Heart left ventricle (tissue), 16 donors: ENCODE measurements at regions of chr11 and their contacts with region 1.

Region 1: DNA sequence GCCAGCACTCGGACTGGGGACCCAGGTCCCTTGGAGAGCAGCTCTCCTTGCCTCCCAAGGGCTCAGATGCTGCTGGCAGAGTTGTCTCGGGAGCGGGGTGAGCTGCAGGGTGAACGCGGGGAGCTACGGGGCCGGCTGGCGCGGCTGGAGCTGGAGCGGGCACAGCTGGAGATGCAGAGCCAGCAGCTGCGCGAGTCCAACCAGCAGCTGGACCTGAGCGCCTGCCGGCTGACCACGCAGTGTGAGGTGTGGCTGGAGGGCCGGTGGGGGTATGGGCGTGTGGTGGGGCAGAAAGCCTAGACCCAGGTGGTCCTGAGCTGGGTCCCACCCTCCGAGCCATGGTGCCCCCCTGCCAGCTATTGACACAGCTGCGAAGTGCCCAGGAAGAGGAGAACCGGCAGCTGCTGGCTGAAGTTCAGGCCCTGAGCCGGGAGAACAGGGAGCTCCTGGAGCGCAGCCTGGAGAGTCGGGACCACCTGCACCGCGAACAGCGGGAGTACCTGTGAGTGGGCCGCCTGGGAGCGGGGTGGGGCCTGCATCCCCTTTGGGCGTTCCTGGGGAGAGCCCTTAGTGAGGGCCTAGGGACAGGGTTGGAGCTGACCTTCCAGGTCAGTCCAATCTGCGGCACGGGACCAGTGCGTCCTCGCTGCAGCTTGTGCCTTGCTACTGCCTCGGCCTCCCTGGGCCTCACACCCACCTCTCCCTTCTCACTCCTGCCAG is 5.8 kb upstream of the RPS6KA4 start:
- DNase-seq: no peak
- ATAC-seq: no peak
- H3K4me3 ChIP-seq: no peak overlapping the region
- H3K27ac ChIP-seq: no peak overlapping the region
- H3K4me1 ChIP-seq: peaks cover under 1 to 31% (median 16%) of the 10 kb centered on the region in 12 donors
- H3K27me3 ChIP-seq: no peaks in the 10 kb centered on the region
- CTCF ChIP-seq: no peak
- POLR2A ChIP-seq: no peak

Region 2: GRCh38 chr11:64086258-64087123 is 266.7 kb before region 1 on chr11:
- intact Hi-C with region 1: no loop called
- DNase-seq: peak in 3 of 5 donors; percentile 43 to 71 (median 47)
- ATAC-seq: peak in 3 of 4 donors; percentile 43 to 73 (median 65)
- H3K4me3 ChIP-seq: no peak overlapping the region
- H3K27ac ChIP-seq: no peak overlapping the region
- H3K4me1 ChIP-seq: peaks cover 0 to 38% (median 2%) of the 10 kb centered on the region in 12 donors
- H3K27me3 ChIP-seq: no peaks in the 10 kb centered on the region
- CTCF ChIP-seq: no peak
- POLR2A ChIP-seq: no peak

Region 3: DNA sequence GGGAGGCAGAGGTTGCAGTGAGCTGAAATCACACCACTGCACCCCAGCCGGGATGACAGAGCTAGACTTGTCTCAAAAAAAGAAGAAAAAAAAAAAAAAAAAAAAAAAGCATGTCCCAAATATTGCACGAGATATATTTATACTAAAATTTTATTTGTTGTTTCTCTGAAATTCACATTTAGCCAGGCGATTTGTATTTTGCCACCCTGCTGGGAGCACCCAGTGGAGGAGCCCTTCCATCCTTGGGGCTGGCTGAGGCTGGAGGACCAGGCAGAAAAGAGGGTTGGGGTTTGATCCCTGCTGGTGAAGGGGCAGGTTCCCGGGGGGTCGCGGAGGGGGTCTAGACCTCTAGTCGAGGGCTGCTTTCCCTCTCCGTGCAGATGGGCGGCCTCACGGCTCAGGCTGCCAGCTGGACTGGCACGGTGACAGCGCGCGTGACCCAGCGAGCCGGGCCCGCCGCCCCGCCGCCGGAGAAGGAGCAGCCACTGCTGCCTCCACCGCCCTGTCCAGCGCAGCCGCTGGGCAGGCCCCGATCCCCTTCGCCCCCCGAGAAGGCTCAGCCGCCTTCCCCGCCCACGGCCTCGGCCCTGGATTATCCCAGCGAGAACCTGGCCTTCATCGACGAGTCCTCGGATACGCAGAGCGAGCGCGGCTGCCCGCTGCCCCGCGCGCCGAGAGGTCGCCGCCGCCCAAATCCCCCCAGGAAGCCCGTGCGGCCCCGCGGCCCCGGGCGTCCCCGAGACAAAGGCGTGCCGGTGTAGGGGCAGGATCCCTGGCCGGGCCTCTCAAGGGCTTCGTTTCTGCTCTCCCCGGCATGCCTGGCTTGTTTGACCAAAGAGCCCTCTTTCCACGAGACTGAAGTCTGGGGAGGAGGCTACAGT is 53.9 kb before region 1 on chr11:
- intact Hi-C with region 1: no loop called
- DNase-seq: peak; percentile 53 to 83 (median 69)
- ATAC-seq: peak in 3 of 4 donors; percentile 52 to 60 (median 54)
- H3K4me3 ChIP-seq: peak overlapping the region; percentile 5 to 57 (median 44)
- H3K27ac ChIP-seq: peak overlapping the region in 3 of 12 donors; percentile 39 to 63 (median 43)
- H3K4me1 ChIP-seq: peaks cover 4 to 36% (median 26%) of the 10 kb centered on the region in 12 donors
- H3K27me3 ChIP-seq: peaks cover 8 to 70% (median 48%) of the 10 kb centered on the region in 9 donors
- CTCF ChIP-seq: no peak
- POLR2A ChIP-seq: no peak

Region 4: DNA sequence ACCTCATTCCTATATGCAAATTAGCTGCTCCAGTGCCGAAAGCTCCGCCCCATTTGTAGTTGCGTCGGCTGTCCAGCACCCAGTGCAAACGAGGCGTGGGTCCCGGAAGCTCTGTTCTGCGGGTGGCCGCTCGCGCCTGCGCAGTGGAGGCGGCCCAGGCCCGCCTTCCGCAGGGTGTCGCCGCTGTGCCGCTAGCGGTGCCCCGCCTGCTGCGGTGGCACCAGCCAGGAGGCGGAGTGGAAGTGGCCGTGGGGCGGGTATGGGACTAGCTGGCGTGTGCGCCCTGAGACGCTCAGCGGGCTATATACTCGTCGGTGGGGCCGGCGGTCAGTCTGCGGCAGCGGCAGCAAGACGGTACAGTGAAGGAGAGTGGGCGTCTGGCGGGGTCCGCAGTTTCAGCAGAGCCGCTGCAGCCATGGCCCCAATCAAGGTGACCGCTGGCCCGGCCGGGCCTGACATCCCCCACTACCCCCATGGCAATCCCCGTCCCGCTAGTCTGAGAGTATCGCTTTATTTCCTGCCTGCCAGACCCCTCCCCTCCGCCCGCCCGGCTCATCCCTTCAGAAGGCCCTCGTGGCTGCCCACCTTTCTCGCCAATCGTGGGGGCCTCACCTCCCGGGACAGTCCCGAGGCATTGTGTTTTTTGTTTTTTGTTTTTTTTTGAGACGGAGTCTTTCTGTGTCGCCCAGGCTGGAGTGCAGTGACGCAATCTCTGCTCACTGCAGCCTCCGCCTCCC is 35.0 kb before region 1 on chr11 and contains the start of gene PRDX5:
- intact Hi-C with region 1: loop called in 7 of 10 experiments (anchors 1 to 5 kb)
- DNase-seq: peak; percentile 97 to 99 (median 98)
- ATAC-seq: peak; percentile 88 to 93 (median 90)
- H3K4me3 ChIP-seq: peak within 1 kb of the TSS; percentile 69 to 99 (median 88)
- H3K27ac ChIP-seq: peak within 1 kb of the TSS; percentile 92 to 100 (median 99)
- H3K4me1 ChIP-seq: peaks cover 0 to 43% (median 25%) of the 10 kb centered on the region in 12 donors
- H3K27me3 ChIP-seq: no peaks in the 10 kb centered on the region
- CTCF ChIP-seq: peak in 11 of 12 donors; percentile 14 to 71 (median 46)
- POLR2A ChIP-seq: peak; percentile 65 to 89
- total RNA-seq, gene PRDX5: 220 to 561 (median 290) TPM